Activated naive CD4-positive, alpha-beta T cell treated with anti-CD3 and anti-CD28 coated beads for 36 hours (primary cell): ENCODE measurements at regions of chr10 and their contacts with region 1.

Region 1: DNA sequence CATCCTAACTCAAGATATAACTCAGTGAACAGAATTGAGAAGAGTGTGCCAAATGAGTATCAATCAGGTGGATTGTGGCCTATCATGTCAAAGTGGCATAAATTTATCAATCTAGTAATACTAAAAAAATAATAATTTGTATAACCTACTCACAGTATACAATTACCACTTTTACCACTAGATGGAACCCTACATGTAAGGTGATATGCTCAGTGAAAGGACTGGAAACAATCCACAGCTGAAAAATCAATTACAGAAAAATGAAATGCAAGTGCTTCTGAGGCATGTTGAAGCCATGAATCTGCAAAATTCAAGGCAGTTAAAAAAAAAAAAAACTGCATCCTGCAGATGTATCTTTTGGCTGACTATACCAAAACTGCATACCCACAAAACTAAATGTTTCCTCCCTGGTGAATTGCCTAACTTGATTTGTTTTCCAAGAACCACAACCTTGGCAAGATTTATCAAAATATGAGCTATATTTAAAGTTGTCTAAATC is 13.9 kb downstream of the ARHGAP19 start:
- DNase-seq: no peak
- H3K4me3 Mint-ChIP-seq: no peak overlapping the region
- H3K27ac Mint-ChIP-seq: no peak overlapping the region
- H3K4me1 Mint-ChIP-seq: peaks cover 12% of the 10 kb centered on the region
- H3K27me3 Mint-ChIP-seq: no peaks in the 10 kb centered on the region

Region 2: GRCh38 chr10:97217299-97217698 is 61.2 kb before region 1 on chr10:
- CTCF ChIA-PET with region 1: no interaction called
- intact Hi-C with region 1: no loop called
- DNase-seq: no peak
- H3K4me3 Mint-ChIP-seq: no peak overlapping the region
- H3K27ac Mint-ChIP-seq: no peak overlapping the region
- H3K4me1 Mint-ChIP-seq: peaks cover 31% of the 10 kb centered on the region
- H3K27me3 Mint-ChIP-seq: no peaks in the 10 kb centered on the region

Region 3: GRCh38 chr10:97318772-97319651 is 40.5 kb after region 1 on chr10 and contains the start of gene FRAT1:
- CTCF ChIA-PET with region 1: interaction called, 14 read pairs
- intact Hi-C with region 1: loop called (anchors 2 kb)
- DNase-seq: peak; percentile 89
- H3K4me3 Mint-ChIP-seq: peak within 1 kb of the TSS; percentile 87
- H3K27ac Mint-ChIP-seq: peak within 1 kb of the TSS; percentile 95
- H3K4me1 Mint-ChIP-seq: peaks cover 23% of the 10 kb centered on the region
- H3K27me3 Mint-ChIP-seq: no peaks in the 10 kb centered on the region
- total RNA-seq, gene FRAT1: 2.3 to 3.0 TPM

Region 4: GRCh38 chr10:97355571-97355975 is 77.0 kb after region 1 on chr10:
- CTCF ChIA-PET with region 1: interaction called, 19 read pairs
- intact Hi-C with region 1: loop called (anchors 2 kb)
- DNase-seq: peak; percentile 20
- H3K4me3 Mint-ChIP-seq: no peak overlapping the region
- H3K27ac Mint-ChIP-seq: no peak overlapping the region
- H3K4me1 Mint-ChIP-seq: no peaks in the 10 kb centered on the region
- H3K27me3 Mint-ChIP-seq: no peaks in the 10 kb centered on the region

Region 5: GRCh38 chr10:97360695-97361536 is 82.4 kb after region 1 on chr10:
- CTCF ChIA-PET with region 1: interaction called, 19 read pairs
- intact Hi-C with region 1: no loop called
- DNase-seq: no peak
- H3K4me3 Mint-ChIP-seq: no peak overlapping the region
- H3K27ac Mint-ChIP-seq: no peak overlapping the region
- H3K4me1 Mint-ChIP-seq: no peaks in the 10 kb centered on the region
- H3K27me3 Mint-ChIP-seq: no peaks in the 10 kb centered on the region